Right lobe of liver (tissue), 6 donors: ENCODE measurements at regions of chr7 and their contacts with region 1.

Region 1: GRCh38 chr7:99036546-99037111 is 107.3 kb downstream of the SMURF1 start:
- DNase-seq: no peak
- ATAC-seq: peak in 1 of 4 donors; percentile 20
- H3K4me3 ChIP-seq: no peak overlapping the region
- H3K27ac ChIP-seq: no peak overlapping the region
- H3K4me1 ChIP-seq: peaks cover 0 to 31% (median 13%) of the 10 kb centered on the region in 4 donors
- H3K27me3 ChIP-seq: no peaks in the 10 kb centered on the region
- CTCF ChIP-seq: peak in 3 of 4 donors; percentile 16 to 30 (median 27)
- POLR2A ChIP-seq: no peak

Region 2: DNA sequence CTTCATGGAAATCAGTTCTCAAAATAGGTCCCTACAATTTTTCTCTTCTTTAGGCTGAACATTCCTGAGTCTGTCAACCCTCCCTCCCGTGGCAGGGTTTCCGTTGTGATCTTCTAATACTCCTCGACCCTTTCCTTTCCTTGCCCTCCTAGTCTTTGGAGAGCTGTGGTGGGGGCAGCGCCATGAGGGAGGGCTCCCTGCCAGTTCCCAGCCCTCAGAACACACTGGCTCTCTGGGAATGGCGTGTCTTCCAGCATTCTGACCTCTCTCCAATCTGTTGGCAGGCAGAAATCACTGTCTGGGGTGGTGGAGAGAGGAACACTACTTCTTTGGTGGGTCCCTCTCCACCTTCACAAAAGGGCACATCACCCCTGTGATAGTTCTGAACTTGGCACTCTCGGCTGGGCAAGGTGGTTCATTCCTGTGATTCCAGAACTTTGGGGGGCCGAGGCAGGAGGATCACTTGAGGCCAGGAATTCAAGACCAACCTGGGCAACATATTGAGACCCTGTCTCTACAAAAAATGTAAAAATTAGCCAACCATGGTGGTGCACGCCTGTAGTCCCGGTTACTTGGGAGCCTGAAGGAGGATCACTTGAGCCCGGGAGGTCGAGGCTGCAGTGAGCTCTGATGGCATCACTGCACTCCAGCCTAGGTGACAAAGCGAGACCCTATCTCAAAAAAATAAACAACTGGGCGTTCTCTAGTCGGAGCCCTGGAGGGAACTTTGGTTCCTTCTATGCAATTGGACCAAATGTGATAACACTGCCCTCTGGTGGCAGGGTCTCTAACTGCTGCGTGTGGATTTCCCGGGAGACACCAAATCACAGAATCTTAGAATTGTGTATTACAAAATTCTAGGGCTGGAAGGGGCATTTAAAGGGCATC is 275.9 kb after region 1 on chr7:
- intact Hi-C with region 1: loop called in 1 of 2 experiments (anchors 5 kb)
- DNase-seq: peak in 2 of 3 donors; percentile 40 to 75
- ATAC-seq: peak; percentile 87 to 97 (median 96)
- H3K4me3 ChIP-seq: no peak overlapping the region
- H3K27ac ChIP-seq: no peak overlapping the region
- H3K4me1 ChIP-seq: no peaks in the 10 kb centered on the region
- H3K27me3 ChIP-seq: no peaks in the 10 kb centered on the region
- CTCF ChIP-seq: peak; percentile 88 to 96 (median 92)
- POLR2A ChIP-seq: no peak